ENCODE measurements at regions of chr2 and their contacts with region 1.

Region 1: GRCh38 chr2:45585267-45585861 is 25.7 kb downstream of the SRBD1 start:
- DNase-seq: peak; percentile 74
- H3K4me3 ChIP-seq: no peak overlapping the region
- H3K27ac ChIP-seq: no peak overlapping the region
- H3K4me1 ChIP-seq: peaks cover 3% of the 10 kb centered on the region
- H3K27me3 ChIP-seq: no peaks in the 10 kb centered on the region
- CTCF ChIP-seq: peak; percentile 58 to 59
- POLR2A ChIP-seq: no peak

Region 2: GRCh38 chr2:45275242-45275805 is 310.0 kb before region 1 on chr2:
- CTCF ChIA-PET with region 1: no interaction called
- POLR2A ChIA-PET with region 1: no interaction called
- dilution Hi-C with region 1: no loop called
- intact Hi-C with region 1: no loop called
- DNase-seq: peak; percentile 70
- H3K4me3 ChIP-seq: no peak overlapping the region
- H3K27ac ChIP-seq: peak overlapping the region; percentile 34
- H3K4me1 ChIP-seq: peaks cover 38% of the 10 kb centered on the region
- H3K27me3 ChIP-seq: no peaks in the 10 kb centered on the region
- CTCF ChIP-seq: no peak
- POLR2A ChIP-seq: no peak

Region 3: DNA sequence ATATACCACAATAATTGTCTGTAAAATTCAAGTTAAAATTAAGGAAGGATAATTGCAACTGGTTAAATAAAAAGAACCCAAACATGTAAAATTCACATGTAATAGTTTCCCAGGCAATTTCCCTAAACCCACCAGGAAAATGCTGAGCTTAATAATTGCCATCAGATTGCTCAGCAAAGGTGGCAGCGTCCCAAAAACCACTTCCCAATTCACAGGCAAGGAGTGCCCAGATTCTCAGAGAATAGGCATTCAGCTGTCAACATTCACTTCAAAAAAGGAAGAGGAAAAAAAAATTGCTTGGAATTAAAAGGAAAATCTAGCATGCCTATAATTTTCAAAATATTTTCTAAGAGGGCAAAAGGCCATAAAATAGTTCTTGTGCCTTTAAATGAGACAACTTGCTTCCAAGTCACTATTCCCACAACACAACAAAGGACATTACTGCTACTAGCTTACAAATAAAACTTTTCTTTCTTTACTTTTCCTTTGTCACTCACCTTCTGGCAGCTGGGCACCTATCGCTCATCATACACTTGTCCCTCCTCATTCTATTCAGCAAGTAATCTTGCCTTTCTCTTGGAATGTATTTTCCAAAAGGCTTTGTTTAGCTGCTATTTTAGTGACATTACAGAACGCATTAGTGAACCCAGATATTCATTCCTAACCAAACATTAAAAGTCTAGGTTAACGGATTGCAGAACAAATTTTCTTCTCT is 10.5 kb after region 1 on chr2:
- CTCF ChIA-PET with region 1: interaction called, 22 read pairs
- POLR2A ChIA-PET with region 1: no interaction called
- dilution Hi-C with region 1: no loop called
- intact Hi-C with region 1: no loop called
- DNase-seq: peak; percentile 56
- H3K4me3 ChIP-seq: no peak overlapping the region
- H3K27ac ChIP-seq: no peak overlapping the region
- H3K4me1 ChIP-seq: no peaks in the 10 kb centered on the region
- H3K27me3 ChIP-seq: no peaks in the 10 kb centered on the region
- CTCF ChIP-seq: no peak
- POLR2A ChIP-seq: no peak

Region 4: GRCh38 chr2:45611020-45611737 is 25.8 kb after region 1 on chr2 and contains the start of gene SRBD1:
- CTCF ChIA-PET with region 1: interaction called, 35 read pairs
- POLR2A ChIA-PET with region 1: no interaction called
- dilution Hi-C with region 1: no loop called
- intact Hi-C with region 1: no loop called
- DNase-seq: peak; percentile 94
- H3K4me3 ChIP-seq: peak within 1 kb of the TSS; percentile 74 to 92 (median 89)
- H3K27ac ChIP-seq: peak within 1 kb of the TSS; percentile 94
- H3K4me1 ChIP-seq: peaks cover 37% of the 10 kb centered on the region
- H3K27me3 ChIP-seq: no peaks in the 10 kb centered on the region
- CTCF ChIP-seq: no peak
- POLR2A ChIP-seq: peak; percentile 93
- total RNA-seq, gene SRBD1: 12.5 and 12.9 TPM in 2 replicates

Region 5: GRCh38 chr2:46002507-46002883 is 417.1 kb after region 1 on chr2:
- CTCF ChIA-PET with region 1: no interaction called
- POLR2A ChIA-PET with region 1: no interaction called
- dilution Hi-C with region 1: no loop called
- intact Hi-C with region 1: no loop called
- DNase-seq: no peak
- H3K4me3 ChIP-seq: no peak overlapping the region
- H3K27ac ChIP-seq: no peak overlapping the region
- H3K4me1 ChIP-seq: no peaks in the 10 kb centered on the region
- H3K27me3 ChIP-seq: no peaks in the 10 kb centered on the region
- CTCF ChIP-seq: no peak
- POLR2A ChIP-seq: no peak